ENCODE measurements at regions of chr3 and their contacts with region 1.

Region 1: DNA sequence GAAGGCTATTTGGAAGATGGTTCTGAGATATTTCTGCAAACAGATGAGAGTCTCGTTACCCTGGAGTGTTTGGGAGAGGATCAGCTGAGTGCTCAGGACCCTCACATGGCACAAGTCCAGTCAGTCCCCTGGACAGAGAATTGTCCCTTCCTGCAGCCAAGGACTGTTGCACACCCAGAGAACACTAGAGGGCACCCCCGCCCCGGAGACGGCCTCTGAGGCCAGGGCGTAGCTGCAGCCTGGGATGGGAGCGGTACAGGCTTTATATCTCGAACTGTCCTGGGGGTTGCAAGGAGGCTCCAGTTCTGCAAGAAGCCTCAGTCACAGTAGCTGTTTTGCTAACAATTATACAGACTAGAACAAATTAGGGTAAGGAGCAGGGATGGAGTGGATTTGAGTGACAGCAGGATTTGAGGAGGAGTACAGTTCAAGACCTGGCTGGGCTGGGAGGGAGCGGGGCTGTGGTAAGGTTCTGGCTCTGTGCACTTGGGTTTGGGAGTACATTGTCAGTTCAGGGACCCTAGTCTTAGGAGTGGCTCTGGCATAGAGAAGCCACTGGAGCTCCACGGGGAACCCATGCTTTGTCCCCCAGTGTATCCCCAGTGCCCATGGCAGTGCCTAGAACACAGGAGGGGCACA is 67.6 kb upstream of the HACD2 start:
- DNase-seq: peak; percentile 83 to 90
- H3K4me3 ChIP-seq: no peak overlapping the region
- H3K27ac ChIP-seq: peak overlapping the region; percentile 85 to 94
- H3K4me1 ChIP-seq: peaks cover 0 to 80% (median 51%) of the 10 kb centered on the region in 4 donors
- H3K27me3 ChIP-seq: no peaks in the 10 kb centered on the region
- CTCF ChIP-seq: peak; percentile 84 to 90

Region 2: GRCh38 chr3:123700791-123701722 is 48.6 kb after region 1 on chr3:
- intact Hi-C with region 1: loop called (anchors 5 kb)
- DNase-seq: peak; percentile 69 to 93
- H3K4me3 ChIP-seq: peak overlapping the region; percentile 85 to 92
- H3K27ac ChIP-seq: peak overlapping the region; percentile 91 to 94
- H3K4me1 ChIP-seq: peaks cover 0 to 56% (median 25%) of the 10 kb centered on the region in 4 donors
- H3K27me3 ChIP-seq: no peaks in the 10 kb centered on the region
- CTCF ChIP-seq: no peak

Region 3: GRCh38 chr3:123719862-123720453 is 67.5 kb after region 1 on chr3:
- intact Hi-C with region 1: loop called (anchors 5 kb)
- DNase-seq: peak; percentile 71 to 94
- H3K4me3 ChIP-seq: no peak overlapping the region
- H3K27ac ChIP-seq: peak overlapping the region; percentile 82 to 83
- H3K4me1 ChIP-seq: peaks cover 0 to 80% (median 34%) of the 10 kb centered on the region in 4 donors
- H3K27me3 ChIP-seq: no peaks in the 10 kb centered on the region
- CTCF ChIP-seq: no peak

Region 4: GRCh38 chr3:123986427-123986826 is 334.0 kb after region 1 on chr3:
- intact Hi-C with region 1: loop called (anchors 10 kb)
- DNase-seq: no peak
- H3K4me3 ChIP-seq: no peak overlapping the region
- H3K27ac ChIP-seq: peak overlapping the region; percentile 72 to 80
- H3K4me1 ChIP-seq: peaks cover 0 to 35% (median 29%) of the 10 kb centered on the region in 4 donors
- H3K27me3 ChIP-seq: no peaks in the 10 kb centered on the region
- CTCF ChIP-seq: no peak